ENCODE measurements at regions of chr3 and their contacts with region 1.

Region 1: DNA sequence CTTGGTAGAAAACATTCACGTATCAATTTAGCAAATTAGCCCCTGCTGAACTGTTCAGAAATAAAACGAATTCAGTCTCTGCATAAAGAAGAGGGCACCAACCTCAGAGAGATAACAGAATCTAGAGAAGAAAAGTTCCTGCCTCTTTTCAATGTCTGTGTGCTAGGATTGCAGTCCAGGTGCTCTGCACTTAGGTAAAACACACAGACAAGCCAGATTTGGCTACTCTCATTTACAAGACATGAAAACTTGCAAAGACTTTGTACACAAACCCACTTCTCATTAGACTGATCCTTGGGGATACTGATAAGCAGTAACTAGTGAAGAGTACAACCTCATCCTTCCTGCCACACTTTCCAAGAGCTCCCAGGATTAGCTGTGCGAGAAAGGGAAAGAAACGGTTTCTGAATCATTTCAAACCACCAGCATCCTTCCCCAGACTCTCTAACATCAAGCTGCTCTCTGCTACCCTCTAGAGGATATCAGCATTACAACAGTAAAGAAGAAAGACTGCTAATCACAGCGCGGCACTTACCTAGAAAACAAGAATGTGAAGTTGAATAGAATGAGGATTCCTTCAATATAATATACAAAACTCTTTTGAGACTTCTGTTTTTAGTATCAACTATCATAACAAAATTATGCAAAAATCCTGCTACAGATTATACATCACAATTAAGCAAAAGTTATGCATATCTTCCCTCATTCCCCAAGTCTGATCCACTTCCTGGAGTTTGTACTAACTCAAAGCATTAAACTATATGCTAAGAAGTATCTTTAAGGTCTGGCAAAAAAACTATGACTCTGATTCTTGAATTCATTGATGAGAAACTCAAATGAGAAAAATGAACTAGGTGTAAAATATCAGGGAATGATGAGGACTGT is 306.4 kb downstream of the MAGI1 start:
- DNase-seq: peak in 1 of 2 donors; percentile 23
- ATAC-seq: peak; percentile 50 to 75 (median 68)
- H3K4me3 ChIP-seq: no peak overlapping the region
- H3K27ac ChIP-seq: no peak overlapping the region
- H3K4me1 ChIP-seq: peaks cover 4 to 44% (median 22%) of the 10 kb centered on the region in 9 donors
- H3K27me3 ChIP-seq: no peaks in the 10 kb centered on the region
- CTCF ChIP-seq: peak; percentile 54 to 91 (median 82)

Region 2: DNA sequence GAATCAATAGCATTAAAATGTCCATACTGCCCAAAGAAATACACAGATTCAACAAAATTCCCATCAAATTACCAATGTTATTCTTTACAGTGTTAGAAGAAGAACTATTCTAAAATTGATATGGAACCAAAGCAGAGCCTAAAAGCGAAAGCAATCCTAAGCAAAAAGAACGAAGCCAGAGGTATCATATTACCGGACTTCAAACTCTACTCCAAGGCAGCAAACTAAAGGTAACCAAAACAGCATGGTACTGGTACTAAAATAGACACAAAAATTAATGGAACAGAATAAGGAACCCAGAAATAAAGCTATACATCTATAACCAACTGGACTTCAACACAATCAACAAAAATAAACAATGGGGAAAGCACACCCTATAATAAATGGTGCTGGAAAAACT is 1212.0 kb before region 1 on chr3:
- intact Hi-C with region 1: loop called in 1 of 10 experiments (anchors 10 kb)
- DNase-seq: no peak
- ATAC-seq: no peak
- H3K4me3 ChIP-seq: no peak overlapping the region
- H3K27ac ChIP-seq: no peak overlapping the region
- H3K4me1 ChIP-seq: no peaks in the 10 kb centered on the region
- H3K27me3 ChIP-seq: no peaks in the 10 kb centered on the region
- CTCF ChIP-seq: no peak

Region 3: DNA sequence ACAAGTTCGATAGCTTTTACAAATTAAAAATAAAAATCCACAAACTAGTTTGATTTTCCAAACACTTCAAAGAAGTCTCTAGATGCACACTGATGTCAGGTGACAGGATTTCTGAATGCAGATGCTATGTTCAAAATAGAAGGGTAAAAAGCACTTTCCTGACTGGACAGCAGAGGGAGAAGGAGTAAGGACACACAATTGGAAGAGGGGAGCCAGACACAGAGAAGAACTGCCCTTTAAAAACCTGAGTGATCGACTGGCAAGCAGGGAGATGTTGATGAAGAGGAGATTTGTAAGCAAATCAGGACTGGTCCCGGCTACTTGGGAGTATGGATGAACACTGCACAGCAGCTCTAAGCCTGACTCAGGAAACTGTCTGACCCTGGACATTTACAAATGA is 306.4 kb before region 1 on chr3:
- intact Hi-C with region 1: loop called in 2 of 10 experiments (anchors 1 to 10 kb)
- DNase-seq: no peak
- ATAC-seq: peak in 2 of 8 donors; percentile 35 to 51
- H3K4me3 ChIP-seq: no peak overlapping the region
- H3K27ac ChIP-seq: no peak overlapping the region
- H3K4me1 ChIP-seq: peaks cover 0 to 15% (median 0%) of the 10 kb centered on the region in 9 donors
- H3K27me3 ChIP-seq: no peaks in the 10 kb centered on the region
- CTCF ChIP-seq: peak in 7 of 9 donors; percentile 13 to 59 (median 49)

Region 4: DNA sequence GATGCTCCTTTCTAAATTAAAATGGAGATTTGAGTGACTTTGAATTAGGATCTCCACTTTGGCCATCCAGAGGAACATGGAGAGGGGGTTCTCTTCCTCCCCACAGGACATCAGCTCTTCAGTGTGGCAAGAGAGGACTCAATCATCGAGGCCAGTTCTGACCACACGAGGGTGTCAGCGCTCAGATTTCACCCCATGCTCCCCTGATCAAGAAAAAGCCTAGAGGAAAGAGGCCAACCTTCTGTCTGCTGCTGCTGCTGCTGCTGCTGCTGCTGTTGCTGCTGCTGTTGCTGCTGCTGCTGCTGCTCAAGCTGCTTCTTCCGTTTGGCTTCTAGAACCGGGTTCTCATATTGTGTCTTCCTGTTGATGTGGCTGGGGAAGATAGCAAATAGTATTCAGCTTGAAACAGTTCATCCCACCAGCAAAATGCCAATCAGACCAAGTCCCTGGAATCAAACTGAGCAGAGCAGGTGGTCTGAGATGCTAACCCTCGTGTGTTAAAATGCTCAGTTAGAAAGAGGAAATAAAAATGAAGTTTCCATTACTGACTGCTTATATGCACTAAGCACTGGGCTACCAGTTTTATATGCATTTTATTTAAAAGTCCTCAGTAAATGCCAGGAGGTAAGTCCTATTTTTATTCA is 292.5 kb before region 1 on chr3:
- intact Hi-C with region 1: loop called in 9 of 10 experiments (anchors 5 to 10 kb)
- DNase-seq: peak; percentile 44 to 61
- ATAC-seq: peak; percentile 84 to 93 (median 90)
- H3K4me3 ChIP-seq: no peak overlapping the region
- H3K27ac ChIP-seq: no peak overlapping the region
- H3K4me1 ChIP-seq: peaks cover 0 to 13% (median 6%) of the 10 kb centered on the region in 9 donors
- H3K27me3 ChIP-seq: no peaks in the 10 kb centered on the region
- CTCF ChIP-seq: peak; percentile 36 to 81 (median 69)

Region 5: GRCh38 chr3:65672871-65673815 is 59.1 kb before region 1 on chr3:
- intact Hi-C with region 1: loop called in 1 of 10 experiments (anchors 5 kb)
- DNase-seq: peak; percentile 55 to 70
- ATAC-seq: peak in 6 of 8 donors; percentile 25 to 76 (median 62)
- H3K4me3 ChIP-seq: no peak overlapping the region
- H3K27ac ChIP-seq: no peak overlapping the region
- H3K4me1 ChIP-seq: peaks cover 0 to 25% (median 9%) of the 10 kb centered on the region in 9 donors
- H3K27me3 ChIP-seq: no peaks in the 10 kb centered on the region
- CTCF ChIP-seq: peak; percentile 58 to 90 (median 83)

Measured in heart right ventricle (tissue), 16 donors.